H1 (cell line): ENCODE measurements at regions of chr15 and their contacts with region 1.

Region 1: GRCh38 chr15:75809986-75810750 is 33.1 kb upstream of the UBE2Q2 start:
- DNase-seq: peak; percentile 33 to 72
- H3K4me3 ChIP-seq: no peak overlapping the region
- H3K27ac ChIP-seq: no peak overlapping the region
- H3K4me1 ChIP-seq: peaks cover 0 to 5% (median 0%) of the 10 kb centered on the region in 4 experiments; a peak in 1 of 7 replicates
- H3K27me3 ChIP-seq: no peaks in the 10 kb centered on the region
- CTCF ChIP-seq: peak; percentile 71 to 92 (median 76)
- EP300 ChIP-seq: no peak
- POLR2A ChIP-seq: no peak
- RAD21 ChIP-seq: peak; percentile 89 to 91

Region 2: GRCh38 chr15:75785771-75786574 is 24.2 kb before region 1 on chr15:
- CTCF ChIA-PET with region 1: interaction called, 16 read pairs
- POLR2A ChIA-PET with region 1: no interaction called
- DNase-seq: peak; percentile 59 to 68
- H3K4me3 ChIP-seq: peak overlapping the region in 1 of 4 experiments; percentile 27; a peak in 1 of 8 replicates
- H3K27ac ChIP-seq: no peak overlapping the region
- H3K4me1 ChIP-seq: peaks cover 0 to 2% (median 0%) of the 10 kb centered on the region in 4 experiments; a peak in 1 of 7 replicates
- H3K27me3 ChIP-seq: no peaks in the 10 kb centered on the region
- CTCF ChIP-seq: peak; percentile 46 to 61 (median 50)
- EP300 ChIP-seq: no peak
- POLR2A ChIP-seq: no peak
- RAD21 ChIP-seq: peak; percentile 48 to 67

Region 3: DNA sequence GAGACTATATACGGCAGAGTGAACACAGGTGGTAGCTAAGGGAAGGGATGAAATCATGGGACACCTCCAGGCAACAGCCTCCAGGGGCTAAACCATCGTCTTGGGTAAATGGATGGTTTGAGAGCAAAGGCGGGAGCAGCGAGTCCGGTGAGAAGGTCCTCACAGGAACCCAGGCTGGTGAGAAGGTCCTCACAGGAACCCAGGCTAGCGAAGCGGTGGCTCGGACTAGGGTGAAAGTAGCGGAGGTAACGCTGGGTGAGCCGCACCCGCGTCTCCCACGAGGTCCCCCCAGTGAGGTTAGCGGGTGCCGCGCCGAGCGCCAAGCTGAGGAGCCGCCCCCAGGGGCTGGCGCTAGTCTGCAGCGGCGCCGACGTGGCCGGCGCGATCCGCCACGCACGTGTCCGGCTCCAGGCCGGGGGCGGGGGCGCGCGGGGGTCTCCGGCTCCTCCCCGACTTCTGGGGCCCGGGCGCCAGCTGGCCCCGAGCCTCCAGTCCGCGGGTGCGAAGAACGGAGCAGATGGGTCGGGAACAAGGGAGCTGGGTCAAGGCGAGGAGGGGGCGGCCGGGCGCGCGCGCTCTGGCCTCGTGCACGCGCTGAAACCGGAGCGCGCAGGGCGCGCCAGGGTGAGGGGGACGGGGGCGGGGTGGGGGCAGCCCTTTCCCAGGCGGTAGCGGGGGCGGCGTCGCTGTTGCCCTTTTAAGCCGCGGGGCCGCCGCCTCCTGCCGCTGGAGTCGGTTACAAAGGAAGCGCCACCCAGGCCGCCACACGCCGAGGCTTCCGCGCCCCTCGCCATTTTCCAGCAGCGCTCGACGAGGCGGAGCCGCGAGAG is 32.8 kb after region 1 on chr15 and contains the start of gene UBE2Q2:
- CTCF ChIA-PET with region 1: interaction called, 12 read pairs
- POLR2A ChIA-PET with region 1: interaction called, 4 read pairs
- DNase-seq: peak in 1 of 2 experiments; percentile 89
- H3K4me3 ChIP-seq: peak within 1 kb of the TSS; percentile 75 to 95 (median 83)
- H3K27ac ChIP-seq: peak within 1 kb of the TSS; percentile 85
- H3K4me1 ChIP-seq: peaks cover 0 to 12% (median 8%) of the 10 kb centered on the region in 4 experiments
- H3K27me3 ChIP-seq: peaks cover 2 to 20% (median 9%) of the 10 kb centered on the region in 4 experiments; a peak in 6 of 7 replicates
- CTCF ChIP-seq: peak in 1 of 3 experiments; percentile 7; a peak in 1 of 4 replicates
- EP300 ChIP-seq: no peak
- POLR2A ChIP-seq: peak; percentile 67 to 79
- RAD21 ChIP-seq: no peak
- total RNA-seq, gene UBE2Q2: 22.4 and 22.7 TPM in 2 replicates

Region 4: GRCh38 chr15:75903331-75904239 is 93.4 kb after region 1 on chr15 and contains the start of gene FBXO22:
- CTCF ChIA-PET with region 1: interaction called, 11 read pairs
- POLR2A ChIA-PET with region 1: interaction called, 11 read pairs
- DNase-seq: peak; percentile 71 to 93
- H3K4me3 ChIP-seq: peak within 1 kb of the TSS; percentile 86 to 93 (median 90)
- H3K27ac ChIP-seq: peak within 1 kb of the TSS; percentile 96
- H3K4me1 ChIP-seq: peaks cover 8 to 22% (median 13%) of the 10 kb centered on the region in 4 experiments; a peak in 5 of 7 replicates
- H3K27me3 ChIP-seq: no peaks in the 10 kb centered on the region
- CTCF ChIP-seq: no peak
- EP300 ChIP-seq: peak in 1 of 2 experiments; percentile 41; a peak in 1 of 3 replicates
- POLR2A ChIP-seq: peak; percentile 87 to 89
- RAD21 ChIP-seq: peak in 1 of 2 experiments; percentile 3; a peak in 2 of 4 replicates
- total RNA-seq, gene FBXO22: 66.8 and 67.3 TPM in 2 replicates

Region 5: DNA sequence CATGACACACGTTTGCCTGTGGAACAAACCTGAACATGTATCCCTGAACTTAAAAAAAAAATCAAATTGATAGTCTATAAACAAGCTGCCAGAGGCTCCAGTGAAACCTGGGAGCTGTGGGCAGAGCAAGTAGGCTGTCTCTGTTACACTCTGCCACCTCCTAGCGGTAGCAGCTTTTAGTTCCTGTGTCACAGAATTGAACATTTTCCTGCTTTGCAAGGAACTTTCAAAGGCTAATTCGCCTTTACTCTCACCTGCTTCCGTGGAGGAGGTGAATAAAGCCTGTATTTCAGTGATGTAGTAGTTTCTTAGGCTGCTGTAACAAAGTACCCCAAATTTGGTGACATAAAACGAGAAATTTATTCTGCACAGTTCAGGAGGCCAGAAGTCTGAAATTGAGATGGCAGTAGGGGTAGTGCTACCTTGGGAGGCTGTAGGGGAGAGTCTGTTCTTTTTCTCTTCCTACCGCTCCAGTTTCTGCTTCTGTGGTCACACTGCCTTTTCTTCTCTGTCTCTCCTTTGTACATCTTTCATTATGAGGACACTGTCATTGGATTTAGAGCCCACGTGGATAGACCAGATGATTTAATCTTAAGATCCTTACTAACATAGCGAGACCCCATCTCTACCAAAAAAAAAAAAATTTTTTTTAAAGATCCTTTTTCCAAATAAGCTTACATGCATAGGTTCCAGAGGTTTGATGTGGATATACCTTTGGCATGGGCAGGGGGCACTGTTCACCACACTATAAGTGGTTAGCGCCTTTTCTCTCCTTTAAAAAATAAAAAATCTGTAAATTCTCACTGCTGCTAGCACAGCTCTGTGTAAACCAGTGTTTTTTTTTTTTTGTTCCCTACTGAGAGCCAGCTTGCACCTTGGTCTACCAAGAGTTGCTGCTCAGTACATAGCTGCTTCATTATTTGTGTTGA is 118.8 kb after region 1 on chr15:
- CTCF ChIA-PET with region 1: interaction called, 110 read pairs
- POLR2A ChIA-PET with region 1: interaction called, 3 read pairs
- DNase-seq: peak in 1 of 2 experiments; percentile 60
- H3K4me3 ChIP-seq: no peak overlapping the region
- H3K27ac ChIP-seq: no peak overlapping the region
- H3K4me1 ChIP-seq: peaks cover 0 to 11% (median 3%) of the 10 kb centered on the region in 4 experiments; a peak in 3 of 7 replicates
- H3K27me3 ChIP-seq: no peaks in the 10 kb centered on the region
- CTCF ChIP-seq: peak; percentile 60 to 87 (median 76)
- EP300 ChIP-seq: no peak
- POLR2A ChIP-seq: no peak
- RAD21 ChIP-seq: peak; percentile 68 to 76

Region 6: GRCh38 chr15:76123031-76123430 is 312.9 kb after region 1 on chr15:
- CTCF ChIA-PET with region 1: no interaction called
- POLR2A ChIA-PET with region 1: no interaction called
- DNase-seq: no peak
- H3K4me3 ChIP-seq: no peak overlapping the region
- H3K27ac ChIP-seq: no peak overlapping the region
- H3K4me1 ChIP-seq: no peaks in the 10 kb centered on the region
- H3K27me3 ChIP-seq: no peaks in the 10 kb centered on the region
- CTCF ChIP-seq: no peak
- EP300 ChIP-seq: no peak
- POLR2A ChIP-seq: no peak
- RAD21 ChIP-seq: no peak